ENCODE measurements at regions of chr11 and their contacts with region 1.

Region 1: DNA sequence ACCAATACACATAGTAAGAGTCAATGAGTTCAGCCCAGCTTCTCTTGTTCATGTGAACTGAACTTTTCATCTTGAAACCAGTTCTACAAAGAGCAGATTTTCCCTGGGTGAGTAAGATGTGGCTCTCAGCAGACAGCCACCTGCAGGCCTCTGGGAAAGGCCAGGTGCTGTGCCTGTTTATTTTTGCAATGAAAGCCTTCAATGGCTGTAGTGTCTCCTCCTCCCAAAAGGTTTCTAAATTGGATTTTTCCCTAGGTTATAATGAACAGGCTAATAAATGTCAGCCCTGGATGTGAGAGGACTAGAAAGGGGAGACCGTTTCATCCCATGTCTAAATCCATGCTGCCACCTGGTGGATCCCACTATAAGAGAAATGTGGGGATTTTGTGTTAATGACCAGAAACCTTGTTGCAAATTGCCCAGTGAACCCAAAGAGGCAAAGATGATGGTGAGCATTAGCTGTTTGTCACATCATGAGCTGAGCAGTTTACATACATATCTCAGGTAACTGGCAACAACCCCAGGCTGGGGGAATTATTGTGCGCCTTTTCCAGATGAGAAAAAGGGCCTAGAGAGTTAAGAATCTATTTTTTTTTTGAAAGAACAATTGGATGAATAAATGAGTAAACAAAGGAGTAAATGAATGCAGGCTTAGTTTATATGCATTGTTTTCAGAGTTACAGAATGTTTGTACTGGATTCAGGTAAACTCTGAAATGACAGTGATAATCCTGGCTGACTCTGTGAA is 12.7 kb downstream of the C11orf91 start:
- DNase-seq: no peak
- ATAC-seq: no peak
- H3K4me3 ChIP-seq: no peak overlapping the region
- H3K27ac ChIP-seq: peak overlapping the region; percentile 94
- H3K4me1 ChIP-seq: peaks cover 46% of the 10 kb centered on the region
- H3K27me3 ChIP-seq: no peaks in the 10 kb centered on the region
- CTCF ChIP-seq: peak; percentile 83

Region 2: DNA sequence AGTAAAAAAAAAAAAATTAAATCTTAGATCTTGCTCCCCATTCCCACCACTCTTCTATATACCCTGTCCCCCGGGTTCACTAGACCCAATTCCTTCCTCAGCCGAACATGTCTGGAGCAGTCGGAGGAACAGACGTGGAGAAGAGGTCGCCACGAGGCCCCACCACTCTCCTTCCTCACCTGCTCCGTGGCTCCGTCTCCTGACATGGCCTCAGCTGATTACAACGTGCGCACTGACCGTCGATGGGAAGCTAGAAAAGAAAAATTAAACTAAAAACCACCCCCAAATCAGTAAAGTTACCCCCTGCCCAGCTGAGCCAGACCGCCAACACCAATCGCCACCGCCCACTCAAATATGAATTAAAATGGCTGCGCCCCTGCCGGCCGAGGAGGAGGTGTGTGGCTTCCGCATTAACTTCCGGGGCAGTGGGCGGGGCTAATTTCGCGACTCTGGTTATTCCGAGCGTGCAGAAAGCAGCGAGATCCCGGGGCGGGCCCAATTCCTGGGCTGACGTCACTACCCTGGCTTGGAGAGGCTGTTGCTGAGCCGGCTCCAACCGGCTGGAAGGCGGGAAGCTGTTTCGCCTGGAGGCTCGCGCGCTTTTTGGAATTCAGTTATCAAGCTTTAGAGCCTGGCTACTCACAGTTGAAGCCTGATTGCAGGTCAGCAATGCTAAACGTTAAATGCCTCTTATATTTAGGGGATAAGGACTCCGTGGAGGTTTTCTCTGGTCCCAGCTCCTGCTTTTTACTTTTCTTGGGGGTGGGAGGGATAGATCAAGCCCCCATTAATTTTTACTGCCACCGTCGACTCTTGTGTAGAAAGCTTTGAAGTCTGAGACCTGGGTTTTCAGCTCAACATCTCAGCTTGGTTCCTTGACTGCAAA is 526.5 kb before region 1 on chr11 and contains the start of gene CSTF3:
- CTCF ChIA-PET with region 1: interaction called, 10 read pairs
- POLR2A ChIA-PET with region 1: no interaction called
- in situ Hi-C with region 1: no loop called
- intact Hi-C with region 1: no loop called
- DNase-seq: peak; percentile 94
- ATAC-seq: peak; percentile 99
- H3K4me3 ChIP-seq: peak within 1 kb of the TSS; percentile 93 to 96
- H3K27ac ChIP-seq: peak within 1 kb of the TSS; percentile 99
- H3K4me1 ChIP-seq: peaks cover 13% of the 10 kb centered on the region; the same call in 1 of the 2 replicates
- H3K27me3 ChIP-seq: no peaks in the 10 kb centered on the region
- CTCF ChIP-seq: no peak
- total RNA-seq, gene CSTF3: 29.8 TPM

Region 3: GRCh38 chr11:33362051-33362910 is 325.6 kb before region 1 on chr11:
- CTCF ChIA-PET with region 1: interaction called, 6 read pairs
- POLR2A ChIA-PET with region 1: interaction called, 3 read pairs
- in situ Hi-C with region 1: no loop called
- intact Hi-C with region 1: loop called (anchors 1 kb)
- DNase-seq: no peak
- ATAC-seq: peak; percentile 79
- H3K4me3 ChIP-seq: no peak overlapping the region
- H3K27ac ChIP-seq: no peak overlapping the region
- H3K4me1 ChIP-seq: no peaks in the 10 kb centered on the region; the same call in 1 of the 2 replicates
- H3K27me3 ChIP-seq: no peaks in the 10 kb centered on the region
- CTCF ChIP-seq: peak; percentile 70

Region 4: DNA sequence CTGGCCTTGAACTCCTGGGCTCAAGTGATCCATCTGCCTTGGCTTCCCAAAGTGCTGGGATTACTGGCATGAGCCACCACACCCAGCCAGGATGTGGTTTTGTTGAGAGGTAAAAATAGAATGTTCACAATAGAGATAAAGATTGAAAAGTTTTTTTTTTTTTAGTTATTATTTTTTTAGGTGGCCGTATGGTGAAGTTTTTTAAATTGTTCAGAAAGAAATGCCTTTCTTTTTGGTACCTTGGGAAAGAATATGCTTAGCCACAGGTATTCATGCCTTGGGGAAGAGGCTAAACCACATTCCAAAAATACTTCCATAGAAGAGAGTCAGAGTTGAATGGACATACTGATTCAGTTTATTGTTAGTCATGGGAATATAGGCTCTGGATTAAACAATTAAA is 130.7 kb before region 1 on chr11:
- CTCF ChIA-PET with region 1: no interaction called
- POLR2A ChIA-PET with region 1: no interaction called
- in situ Hi-C with region 1: no loop called
- intact Hi-C with region 1: loop called (anchors 10 kb)
- DNase-seq: no peak
- ATAC-seq: no peak
- H3K4me3 ChIP-seq: no peak overlapping the region
- H3K27ac ChIP-seq: no peak overlapping the region
- H3K4me1 ChIP-seq: no peaks in the 10 kb centered on the region
- H3K27me3 ChIP-seq: no peaks in the 10 kb centered on the region
- CTCF ChIP-seq: no peak

Region 5: GRCh38 chr11:33700425-33701271 is 12.7 kb after region 1 on chr11 and contains the start of gene C11orf91:
- CTCF ChIA-PET with region 1: interaction called, 3 read pairs
- POLR2A ChIA-PET with region 1: interaction called, 12 read pairs
- in situ Hi-C with region 1: no loop called
- intact Hi-C with region 1: no loop called
- DNase-seq: peak; percentile 77
- ATAC-seq: peak; percentile 76
- H3K4me3 ChIP-seq: peak within 1 kb of the TSS; percentile 48 to 53
- H3K27ac ChIP-seq: peak within 1 kb of the TSS; percentile 94
- H3K4me1 ChIP-seq: peaks cover 91% of the 10 kb centered on the region
- H3K27me3 ChIP-seq: no peaks in the 10 kb centered on the region
- CTCF ChIP-seq: no peak
- total RNA-seq, gene C11orf91: 1.3 TPM

Region 6: GRCh38 chr11:33742249-33742851 is 54.4 kb after region 1 on chr11:
- CTCF ChIA-PET with region 1: interaction called, 12 read pairs
- POLR2A ChIA-PET with region 1: interaction called, 5 read pairs
- in situ Hi-C with region 1: no loop called
- intact Hi-C with region 1: no loop called
- DNase-seq: no peak
- ATAC-seq: peak; percentile 82
- H3K4me3 ChIP-seq: no peak overlapping the region
- H3K27ac ChIP-seq: peak overlapping the region; percentile 32; the same call in 1 of the 2 replicates
- H3K4me1 ChIP-seq: peaks cover 15% of the 10 kb centered on the region
- H3K27me3 ChIP-seq: no peaks in the 10 kb centered on the region
- CTCF ChIP-seq: peak; percentile 65

Region 7: GRCh38 chr11:33774736-33775466 is 87.0 kb after region 1 on chr11:
- CTCF ChIA-PET with region 1: no interaction called
- POLR2A ChIA-PET with region 1: no interaction called
- in situ Hi-C with region 1: no loop called
- intact Hi-C with region 1: no loop called
- DNase-seq: no peak
- ATAC-seq: peak; percentile 33
- H3K4me3 ChIP-seq: peak overlapping the region; percentile 83 to 84
- H3K27ac ChIP-seq: peak overlapping the region; percentile 60
- H3K4me1 ChIP-seq: peaks cover 13% of the 10 kb centered on the region
- H3K27me3 ChIP-seq: no peaks in the 10 kb centered on the region
- CTCF ChIP-seq: no peak

Measured in Panc1 (cell line).